Heart left ventricle (tissue), 16 donors: ENCODE measurements at regions of chr22 and their contacts with region 1.

Region 1: GRCh38 chr22:19178656-19179496 is at the start of gene SLC25A1:
- DNase-seq: peak; percentile 92 to 97 (median 94)
- ATAC-seq: peak; percentile 81 to 91 (median 89)
- H3K4me3 ChIP-seq: peak within 1 kb of the TSS; percentile 77 to 99 (median 88)
- H3K27ac ChIP-seq: peak within 1 kb of the TSS; percentile 74 to 92 (median 86)
- H3K4me1 ChIP-seq: peaks cover 8 to 47% (median 31%) of the 10 kb centered on the region in 12 donors
- H3K27me3 ChIP-seq: no peaks in the 10 kb centered on the region
- CTCF ChIP-seq: no peak
- POLR2A ChIP-seq: no peak
- total RNA-seq, gene SLC25A1: 16.1 to 35.8 (median 24.6) TPM

Region 2: DNA sequence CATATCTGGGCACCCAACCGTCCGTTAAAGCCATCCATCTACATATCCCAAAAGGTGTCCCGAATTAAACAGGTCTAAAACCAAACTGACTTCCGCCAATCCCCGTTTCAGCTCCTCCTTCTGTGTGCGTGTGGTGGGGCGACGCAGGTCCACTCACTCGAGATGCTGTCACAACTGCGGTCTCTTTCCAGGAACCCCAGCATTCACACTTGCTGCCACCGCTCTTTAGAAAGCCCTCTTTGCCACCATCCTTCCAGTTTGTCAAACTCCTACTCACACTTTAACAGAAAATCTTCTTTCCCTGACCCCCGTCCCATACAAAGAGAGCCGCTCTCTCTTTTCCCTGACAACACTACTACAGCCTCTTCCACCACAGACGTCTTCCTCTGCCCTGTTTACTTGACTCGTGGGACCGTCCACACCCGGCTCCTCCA is 34.9 kb before region 1 on chr22:
- intact Hi-C with region 1: loop called in 1 of 10 experiments (anchors 5 kb)
- DNase-seq: no peak
- ATAC-seq: no peak
- H3K4me3 ChIP-seq: peak overlapping the region; percentile 61 to 94 (median 80)
- H3K27ac ChIP-seq: peak overlapping the region in 11 of 12 donors; percentile 3 to 86 (median 78)
- H3K4me1 ChIP-seq: peaks cover 0 to 15% (median 9%) of the 10 kb centered on the region in 12 donors
- H3K27me3 ChIP-seq: peaks cover 6 to 18% (median 13%) of the 10 kb centered on the region in 9 donors
- CTCF ChIP-seq: no peak
- POLR2A ChIP-seq: no peak

Region 3: GRCh38 chr22:19232623-19233022 is 53.7 kb after region 1 on chr22:
- intact Hi-C with region 1: no loop called
- DNase-seq: no peak
- ATAC-seq: no peak
- H3K4me3 ChIP-seq: no peak overlapping the region
- H3K27ac ChIP-seq: no peak overlapping the region
- H3K4me1 ChIP-seq: peaks cover 0 to 4% (median 0%) of the 10 kb centered on the region in 12 donors
- H3K27me3 ChIP-seq: no peaks in the 10 kb centered on the region
- CTCF ChIP-seq: no peak
- POLR2A ChIP-seq: no peak

Region 4: DNA sequence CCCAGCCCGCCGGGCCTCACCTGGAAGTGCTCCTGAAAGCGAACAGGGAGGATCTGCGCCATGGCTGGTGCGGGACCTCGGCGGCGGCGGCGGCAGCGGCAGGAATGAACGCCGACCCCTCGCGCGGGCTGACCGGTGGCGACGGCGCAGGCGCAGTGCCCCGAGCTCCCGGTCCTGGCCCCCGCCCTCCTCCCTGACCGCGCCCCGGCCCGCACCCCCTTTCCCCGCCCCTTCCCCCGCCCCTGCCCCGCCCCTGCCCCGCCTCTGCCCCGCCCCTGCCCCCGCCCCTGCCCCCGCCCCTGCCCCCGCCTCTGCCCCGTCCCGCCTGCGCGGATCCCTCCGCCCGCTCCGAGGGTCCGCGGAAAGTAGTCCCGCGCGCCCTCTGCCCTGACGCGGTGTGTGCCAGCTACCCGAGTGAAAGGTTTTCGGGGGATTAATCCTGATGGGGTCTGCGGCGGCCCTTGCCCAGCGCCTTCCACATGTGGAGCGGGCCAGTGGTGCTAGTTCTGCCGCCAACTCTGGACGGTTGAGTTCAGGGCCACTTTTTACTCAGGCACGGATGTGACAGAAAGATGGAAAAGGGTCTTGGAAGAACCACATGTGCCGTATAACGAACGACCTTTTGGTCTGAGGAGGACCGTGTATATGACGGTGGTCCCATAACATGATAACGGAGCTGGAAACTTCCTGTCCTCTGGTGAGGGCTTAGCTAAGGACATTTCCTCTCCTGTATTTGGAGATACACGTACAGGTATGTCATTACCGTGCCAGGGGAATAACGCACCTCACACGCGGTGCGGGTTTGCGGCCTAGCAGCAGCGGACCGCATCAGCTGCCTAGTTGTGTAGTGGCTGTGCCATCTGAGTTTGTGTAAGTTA is 112.9 kb after region 1 on chr22 and contains the start of gene CLTCL1:
- intact Hi-C with region 1: loop called in 1 of 10 experiments (anchors 5 kb)
- DNase-seq: peak; percentile 86 to 93 (median 89)
- ATAC-seq: peak; percentile 65 to 94 (median 88)
- H3K4me3 ChIP-seq: peak within 1 kb of the TSS; percentile 62 to 100 (median 92)
- H3K27ac ChIP-seq: peak within 1 kb of the TSS; percentile 64 to 93 (median 82)
- H3K4me1 ChIP-seq: peaks cover 0 to 49% (median 24%) of the 10 kb centered on the region in 12 donors
- H3K27me3 ChIP-seq: no peaks in the 10 kb centered on the region
- CTCF ChIP-seq: no peak
- POLR2A ChIP-seq: peak in 1 of 2 donors; percentile 70
- total RNA-seq, gene CLTCL1: 7.6 to 20.9 (median 10.4) TPM

Region 5: GRCh38 chr22:19398206-19398605 is 219.3 kb after region 1 on chr22:
- intact Hi-C with region 1: loop called in 1 of 10 experiments (anchors 10 kb)
- DNase-seq: no peak
- ATAC-seq: peak in 2 of 4 donors; percentile 24 to 31
- H3K4me3 ChIP-seq: no peak overlapping the region
- H3K27ac ChIP-seq: no peak overlapping the region
- H3K4me1 ChIP-seq: peaks cover 0 to 5% (median 0%) of the 10 kb centered on the region in 12 donors
- H3K27me3 ChIP-seq: no peaks in the 10 kb centered on the region
- CTCF ChIP-seq: no peak
- POLR2A ChIP-seq: no peak

Region 6: DNA sequence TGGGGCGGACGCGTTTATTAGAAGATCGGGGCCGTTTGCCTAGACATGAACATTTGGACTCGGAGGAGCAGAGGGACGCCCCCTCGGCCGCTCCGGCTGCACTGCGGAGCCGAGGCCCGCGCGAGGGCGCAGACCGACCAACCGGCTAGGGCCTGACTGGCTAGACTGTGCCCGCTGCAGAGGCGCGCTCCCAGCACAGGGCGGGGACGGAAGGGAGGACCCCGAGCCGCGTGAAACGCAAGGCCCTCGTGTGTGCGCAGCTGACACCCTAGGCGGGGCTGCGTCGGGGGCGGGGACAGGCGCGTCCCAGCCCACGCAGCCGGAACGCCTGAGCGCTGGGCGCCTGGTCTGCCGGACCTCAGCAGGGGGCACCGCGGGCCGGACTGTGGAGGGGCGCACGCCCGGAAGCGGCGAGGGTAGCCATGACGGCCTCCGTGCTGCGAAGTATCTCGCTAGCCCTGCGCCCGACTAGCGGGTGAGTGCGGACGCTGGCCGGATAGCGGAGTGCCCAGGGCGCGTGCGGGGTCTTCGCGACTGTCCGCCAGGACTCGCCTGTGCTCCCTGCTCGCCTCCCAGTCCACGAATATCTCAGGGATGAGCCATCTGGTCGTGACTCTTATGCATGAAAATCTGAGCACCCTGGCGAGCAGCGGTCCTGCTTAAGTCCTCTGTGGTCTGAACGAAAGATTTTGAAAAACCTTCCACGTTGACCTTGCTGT is 253.4 kb after region 1 on chr22 and contains the start of gene MRPL40:
- intact Hi-C with region 1: loop called in 1 of 10 experiments (anchors 5 kb)
- DNase-seq: peak; percentile 95 to 98 (median 97)
- ATAC-seq: peak; percentile 95 to 98 (median 98)
- H3K4me3 ChIP-seq: peak within 1 kb of the TSS; percentile 62 to 95 (median 86)
- H3K27ac ChIP-seq: peak within 1 kb of the TSS; percentile 93 to 99 (median 98)
- H3K4me1 ChIP-seq: peaks cover 7 to 46% (median 29%) of the 10 kb centered on the region in 12 donors
- H3K27me3 ChIP-seq: no peaks in the 10 kb centered on the region
- CTCF ChIP-seq: peak in 4 of 12 donors; percentile 15 to 28 (median 21)
- POLR2A ChIP-seq: peak in 1 of 2 donors; percentile 86
- total RNA-seq, gene MRPL40: 39.9 to 62.7 (median 54.2) TPM

Region 7: DNA sequence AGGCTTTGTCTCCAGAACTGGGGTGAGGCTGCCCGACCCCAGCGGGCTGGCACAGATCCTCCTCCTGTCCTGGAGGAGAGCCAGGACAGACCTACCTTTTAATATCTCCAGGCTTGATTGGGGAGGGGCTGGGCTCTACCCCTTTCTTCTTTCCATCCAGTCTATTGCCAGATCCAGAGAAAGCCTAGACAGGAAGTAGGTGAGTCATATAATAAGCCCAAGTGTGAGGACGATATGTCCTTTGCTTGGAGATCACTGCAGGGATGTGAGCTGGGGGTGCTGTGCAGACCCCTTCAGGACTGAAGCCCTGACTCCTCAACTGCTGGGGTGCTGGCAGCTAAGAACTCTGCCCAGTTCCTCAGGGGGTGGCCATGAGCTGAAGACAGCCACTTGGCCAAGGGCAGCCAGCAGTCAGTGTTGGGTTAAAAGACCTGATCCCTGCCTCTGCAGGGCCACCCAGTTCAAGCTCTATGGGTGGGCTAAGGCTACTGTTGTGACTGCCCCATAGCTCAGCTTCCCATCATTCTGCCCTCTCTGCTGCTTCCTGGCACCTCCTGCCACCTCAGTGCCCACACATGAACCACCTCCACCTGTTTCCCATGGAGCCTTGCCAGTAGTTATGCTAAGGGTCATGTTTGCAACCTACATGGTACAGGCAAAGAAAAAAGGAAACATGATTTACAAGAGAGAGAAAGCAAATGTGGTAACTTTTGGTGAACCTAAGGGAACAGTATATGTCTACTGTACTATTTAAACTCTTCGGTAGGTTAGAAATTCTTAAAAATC is 276.9 kb after region 1 on chr22:
- intact Hi-C with region 1: loop called in 1 of 10 experiments (anchors 10 kb)
- DNase-seq: no peak
- ATAC-seq: no peak
- H3K4me3 ChIP-seq: no peak overlapping the region
- H3K27ac ChIP-seq: no peak overlapping the region
- H3K4me1 ChIP-seq: no peaks in the 10 kb centered on the region
- H3K27me3 ChIP-seq: no peaks in the 10 kb centered on the region
- CTCF ChIP-seq: no peak
- POLR2A ChIP-seq: no peak